Activated CD4-positive, alpha-beta memory T cell treated with anti-CD3 and anti-CD28 coated beads, Interleukin-2, amount 10 ng/mL, durations not matched to agents 7 days and 5 days (primary cell): ENCODE measurements at regions of chr2 and their contacts with region 1.

Region 1: DNA sequence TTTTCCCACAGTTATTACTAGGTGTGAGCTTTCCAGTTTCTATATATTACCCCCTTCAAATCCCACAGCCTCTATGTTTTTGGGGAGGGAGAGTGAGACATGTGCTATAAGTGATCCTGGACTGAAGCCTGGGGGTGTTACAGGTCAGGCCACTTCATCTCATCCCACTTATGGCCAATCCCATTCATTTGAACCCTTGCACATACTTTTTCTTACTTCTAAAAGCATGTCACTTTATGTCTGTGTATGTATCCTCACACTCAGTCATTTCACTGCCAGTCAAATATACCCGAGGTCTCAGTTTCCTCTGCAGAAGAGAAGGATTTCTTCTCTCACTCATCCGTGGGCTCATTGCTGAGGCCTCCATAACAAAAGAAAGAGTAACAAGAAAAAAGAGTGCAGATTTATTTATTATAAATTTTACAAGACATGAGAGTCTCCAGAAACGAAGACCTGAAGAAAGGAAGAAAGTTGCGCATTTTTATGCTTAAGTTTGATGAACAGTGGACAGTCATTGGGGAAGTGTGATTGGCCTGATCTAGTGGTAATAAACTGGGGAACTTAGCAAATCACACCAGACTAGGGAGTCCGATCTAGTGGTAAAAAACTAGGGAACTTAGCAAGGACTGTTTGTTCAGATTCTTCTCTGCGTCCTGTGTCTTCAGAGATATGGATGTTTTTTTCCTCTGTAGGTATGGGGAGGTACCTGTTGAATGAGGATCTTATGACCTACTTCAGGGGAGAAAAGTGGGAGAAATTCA is 52.1 kb downstream of the ICOS start:
- DNase-seq: no peak
- H3K4me3 Mint-ChIP-seq: no peak overlapping the region
- H3K27ac Mint-ChIP-seq: peak overlapping the region; percentile 59
- H3K4me1 Mint-ChIP-seq: peaks cover 35% of the 10 kb centered on the region
- H3K27me3 Mint-ChIP-seq: no peaks in the 10 kb centered on the region

Region 2: GRCh38 chr2:204005940-204006721 is 17.5 kb after region 1 on chr2:
- CTCF ChIA-PET with region 1: interaction called, 3 read pairs
- POLR2A ChIA-PET with region 1: interaction called, 13 read pairs
- DNase-seq: no peak
- H3K4me3 Mint-ChIP-seq: no peak overlapping the region
- H3K27ac Mint-ChIP-seq: peak overlapping the region; percentile 79
- H3K4me1 Mint-ChIP-seq: peaks cover 76% of the 10 kb centered on the region
- H3K27me3 Mint-ChIP-seq: no peaks in the 10 kb centered on the region

Region 3: DNA sequence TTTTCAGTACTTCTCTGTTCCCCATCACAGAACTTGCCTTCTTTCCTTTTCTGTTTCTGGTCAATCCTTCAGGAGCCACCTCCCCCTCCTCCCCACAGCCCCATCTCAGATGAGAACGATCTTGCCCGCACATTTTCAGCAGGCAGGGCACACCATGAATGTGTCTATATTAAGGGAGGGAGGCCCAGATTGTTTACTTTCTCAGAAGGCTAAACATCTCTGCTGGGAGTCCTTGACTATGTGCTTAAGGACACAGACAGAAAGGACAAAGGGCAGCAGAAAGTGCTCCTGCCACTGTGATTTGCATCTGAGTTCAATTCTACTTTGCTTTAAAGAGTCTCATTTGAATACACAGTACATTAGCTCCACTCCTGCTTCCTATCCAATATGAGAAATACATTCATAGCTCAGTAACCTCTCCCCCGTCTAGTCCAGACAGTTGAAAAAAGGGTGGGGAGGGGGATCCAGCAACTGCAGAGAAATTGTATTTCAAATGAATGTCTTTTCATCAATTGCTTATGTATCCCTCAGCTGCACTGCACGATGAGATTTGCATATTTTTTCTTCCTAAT is 381.6 kb after region 1 on chr2:
- CTCF ChIA-PET with region 1: no interaction called
- POLR2A ChIA-PET with region 1: no interaction called
- DNase-seq: no peak
- H3K4me3 Mint-ChIP-seq: no peak overlapping the region
- H3K27ac Mint-ChIP-seq: no peak overlapping the region
- H3K4me1 Mint-ChIP-seq: no peaks in the 10 kb centered on the region
- H3K27me3 Mint-ChIP-seq: peaks cover 11% of the 10 kb centered on the region